Psoas muscle (tissue), 8 donors: ENCODE measurements at regions of chr9 and their contacts with region 1.

Region 1: DNA sequence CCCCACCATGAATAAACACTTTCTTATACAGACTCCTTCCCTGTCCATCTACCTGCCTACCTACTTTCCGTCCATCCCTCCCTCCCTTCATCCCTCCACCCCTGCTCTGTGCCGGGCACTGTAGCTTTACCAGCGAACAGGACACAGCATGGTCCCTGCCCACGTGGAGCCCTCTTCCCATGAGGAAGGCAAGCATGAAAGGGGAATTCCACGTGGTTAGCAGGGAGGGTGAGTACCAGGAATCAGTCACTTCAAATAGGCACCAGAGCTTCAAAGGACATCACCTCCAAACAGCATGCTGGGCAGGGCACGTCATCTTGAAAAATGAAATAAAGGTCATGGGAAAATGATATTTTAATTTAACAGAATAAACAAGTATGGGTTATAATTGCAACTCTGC is 35.0 kb upstream of the TDRD7 start:
- DNase-seq: no peak
- ATAC-seq: no peak
- H3K4me3 ChIP-seq: no peak overlapping the region
- H3K27ac ChIP-seq: no peak overlapping the region
- H3K4me1 ChIP-seq: no peaks in the 10 kb centered on the region
- H3K27me3 ChIP-seq: no peaks in the 10 kb centered on the region
- CTCF ChIP-seq: no peak

Region 2: DNA sequence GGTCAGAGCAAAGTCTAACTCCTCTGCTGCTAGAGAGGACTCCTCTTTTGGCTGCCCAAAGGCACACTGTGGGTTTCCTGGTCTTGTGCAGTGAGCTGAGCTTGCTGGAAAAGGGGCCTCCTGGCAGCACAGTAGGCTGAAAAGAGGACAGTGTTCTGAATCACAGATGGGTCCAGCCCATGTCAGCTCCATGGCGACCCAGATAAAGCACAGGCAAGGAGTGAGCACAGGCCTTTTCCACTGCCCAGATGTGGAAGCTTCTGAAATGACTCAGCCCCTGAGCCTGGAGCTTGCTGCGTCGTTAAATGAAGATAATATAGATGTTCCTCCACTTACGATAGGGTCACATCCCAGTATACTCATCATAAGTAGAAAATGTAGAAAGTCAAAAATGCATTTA is 61.4 kb before region 1 on chr9:
- intact Hi-C with region 1: no loop called
- DNase-seq: no peak
- ATAC-seq: no peak
- H3K4me3 ChIP-seq: no peak overlapping the region
- H3K27ac ChIP-seq: no peak overlapping the region
- H3K4me1 ChIP-seq: no peaks in the 10 kb centered on the region
- H3K27me3 ChIP-seq: no peaks in the 10 kb centered on the region
- CTCF ChIP-seq: no peak

Region 3: GRCh38 chr9:97447001-97447400 is 70.1 kb after region 1 on chr9:
- intact Hi-C with region 1: loop called in 1 of 2 experiments (anchors 2 kb)
- DNase-seq: no peak
- ATAC-seq: no peak
- H3K4me3 ChIP-seq: no peak overlapping the region
- H3K27ac ChIP-seq: no peak overlapping the region
- H3K4me1 ChIP-seq: peaks cover under 1% of the 10 kb centered on the region
- H3K27me3 ChIP-seq: no peaks in the 10 kb centered on the region
- CTCF ChIP-seq: no peak

Region 4: DNA sequence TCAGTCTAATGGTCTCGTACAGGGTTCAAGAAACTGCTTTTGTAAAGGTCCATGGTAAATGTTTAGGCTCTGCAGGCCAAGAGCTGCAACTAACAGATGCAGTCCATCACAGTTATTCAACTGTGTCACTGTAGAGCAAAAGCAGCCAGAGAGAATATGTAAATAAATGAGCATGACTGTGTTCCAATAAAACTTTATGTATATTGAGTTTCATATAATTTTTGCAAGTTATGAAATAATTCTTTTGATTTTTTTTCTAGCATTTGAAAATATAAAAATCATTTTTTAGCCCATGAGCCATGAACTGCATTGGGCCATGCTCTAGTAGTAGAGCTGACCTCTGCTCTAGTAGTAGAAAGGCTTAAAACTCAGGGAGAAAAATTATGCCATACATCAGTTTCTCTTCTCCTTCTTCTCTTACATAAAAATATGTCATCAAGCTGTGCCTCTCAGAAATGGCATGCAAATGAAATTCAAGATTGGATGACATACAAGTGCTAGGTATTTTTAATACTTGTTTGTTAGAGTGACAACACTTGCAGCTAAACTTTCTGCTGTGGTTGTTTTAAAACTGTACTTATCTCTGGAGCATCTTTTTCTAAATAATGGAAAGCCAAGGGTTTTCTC is 82.3 kb after region 1 on chr9:
- intact Hi-C with region 1: no loop called
- DNase-seq: no peak
- ATAC-seq: no peak
- H3K4me3 ChIP-seq: no peak overlapping the region
- H3K27ac ChIP-seq: no peak overlapping the region
- H3K4me1 ChIP-seq: no peaks in the 10 kb centered on the region
- H3K27me3 ChIP-seq: no peaks in the 10 kb centered on the region
- CTCF ChIP-seq: no peak